ENCODE measurements at regions of chr2 and their contacts with region 1.

Region 1: DNA sequence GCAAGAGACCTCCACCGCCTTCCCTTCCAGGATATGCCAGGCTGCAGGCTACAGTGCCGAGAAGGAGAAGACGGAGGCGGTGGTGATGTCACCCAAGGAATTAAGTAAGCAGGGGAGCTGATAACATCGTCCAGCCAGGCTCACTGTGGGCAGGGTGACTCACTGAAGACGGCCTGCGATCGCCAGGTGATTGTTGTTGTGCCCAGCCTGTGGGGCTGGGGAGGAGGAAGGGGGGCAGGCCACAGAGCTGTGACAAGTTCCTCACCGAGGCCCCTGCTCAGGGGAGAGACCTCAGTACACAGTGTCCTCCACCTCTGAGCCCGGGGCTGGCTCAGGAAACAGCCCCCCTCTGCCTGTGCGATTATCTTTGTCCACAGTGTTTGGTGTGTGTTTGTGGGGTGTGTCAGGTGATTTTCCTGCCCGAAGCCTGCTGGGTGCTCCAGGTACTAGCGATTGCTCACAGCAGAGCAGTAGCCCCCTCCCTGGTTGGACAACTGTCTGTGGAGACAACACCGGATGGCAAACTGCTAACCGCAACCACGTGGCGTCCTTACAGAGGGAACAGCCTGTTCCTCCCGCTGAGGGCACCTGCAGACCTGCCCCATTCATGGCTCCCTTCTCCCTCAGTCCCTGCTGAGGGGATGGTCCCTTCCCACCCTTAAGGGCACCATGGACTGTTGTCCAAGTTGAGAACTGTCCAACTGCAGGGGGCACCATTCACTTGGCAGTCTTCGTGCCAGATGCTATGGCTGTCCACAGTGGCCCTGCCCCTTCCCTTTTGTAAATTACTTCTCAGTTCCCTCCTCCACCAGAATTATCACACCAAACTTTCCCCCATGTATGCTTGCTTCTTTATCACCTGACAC is 95.1 kb downstream of the ZFP36L2 start:
- DNase-seq: peak; percentile 87 to 96
- ATAC-seq: peak; percentile 86 to 87
- H3K4me3 ChIP-seq: no peak overlapping the region
- H3K27ac ChIP-seq: peak overlapping the region; percentile 75 to 86
- H3K4me1 ChIP-seq: peaks cover 31% of the 10 kb centered on the region
- CTCF ChIP-seq: peak; percentile 89
- EP300 ChIP-seq: peak in 1 of 2 experiments; percentile 12; a peak in 1 of 5 replicates
- POLR2A ChIP-seq: no peak
- RAD21 ChIP-seq: peak; percentile 94 to 96

Region 2: DNA sequence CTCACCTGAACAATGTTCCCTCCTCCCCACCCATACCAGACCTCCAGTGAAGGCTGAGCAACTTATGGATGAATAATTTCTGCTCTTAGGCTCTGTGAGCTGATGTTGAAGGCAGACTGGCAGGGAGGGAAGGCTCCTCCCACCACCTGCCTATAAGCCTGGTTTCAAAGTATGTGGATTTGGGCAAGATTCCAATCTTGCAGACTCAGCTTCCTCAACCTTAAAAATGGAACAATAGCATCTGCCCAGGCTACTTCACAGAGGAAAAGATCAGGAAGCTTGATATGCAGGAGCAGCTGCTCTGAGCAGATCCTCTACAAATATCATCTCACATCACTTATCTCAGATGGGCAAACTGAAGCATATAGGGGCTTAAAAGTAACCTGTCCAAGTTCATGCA is 17.0 kb before region 1 on chr2:
- CTCF ChIA-PET with region 1: interaction called, 13 read pairs
- POLR2A ChIA-PET with region 1: no interaction called
- DNase-seq: no peak
- ATAC-seq: no peak
- H3K4me3 ChIP-seq: no peak overlapping the region
- H3K27ac ChIP-seq: peak overlapping the region in 1 of 2 experiments; percentile 60; a peak in 1 of 6 replicates
- H3K4me1 ChIP-seq: peaks cover 22% of the 10 kb centered on the region
- CTCF ChIP-seq: no peak
- EP300 ChIP-seq: no peak
- POLR2A ChIP-seq: no peak
- RAD21 ChIP-seq: no peak

Region 3: DNA sequence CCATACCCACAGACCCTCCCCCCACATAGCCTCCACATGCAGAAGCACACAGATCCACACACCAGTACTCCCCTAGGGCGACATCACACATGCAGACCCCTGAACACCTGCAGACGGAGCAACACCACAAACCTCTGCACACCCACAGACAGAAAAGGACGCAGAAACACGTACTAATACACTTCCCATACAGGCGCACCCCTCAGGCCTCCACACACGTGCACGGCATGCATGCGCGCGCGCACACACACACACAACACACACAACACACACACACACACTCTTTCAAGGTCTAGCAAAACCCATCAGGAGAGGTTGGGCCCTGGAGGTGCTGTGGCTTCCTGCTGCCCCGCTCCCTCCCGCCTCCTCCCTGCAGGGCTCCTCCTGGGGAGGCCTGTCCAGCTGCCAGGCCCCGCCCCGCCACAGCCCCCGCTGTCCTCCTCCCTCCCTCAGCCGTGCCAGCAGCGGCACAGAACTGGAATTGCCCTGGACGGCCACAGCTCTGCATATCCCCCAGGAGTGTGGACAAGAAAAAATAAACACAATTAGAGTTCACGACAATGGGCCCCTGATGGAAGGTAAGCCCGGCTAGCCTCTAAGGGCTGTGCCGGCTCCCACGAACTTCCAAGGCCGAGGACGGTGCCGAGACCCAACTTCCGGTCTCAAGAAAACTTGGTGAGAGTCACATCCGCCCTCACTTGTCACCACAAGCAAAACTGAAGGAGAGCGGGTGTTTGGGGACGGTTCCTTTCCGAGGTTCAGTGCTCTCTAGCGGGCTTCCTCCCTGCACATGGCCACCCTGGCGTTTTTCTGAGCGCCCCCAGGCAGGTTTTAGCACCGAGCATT is 88.3 kb after region 1 on chr2:
- CTCF ChIA-PET with region 1: interaction called, 18 read pairs
- POLR2A ChIA-PET with region 1: interaction called, 4 read pairs
- DNase-seq: peak; percentile 81 to 93
- ATAC-seq: peak; percentile 71 to 84
- H3K4me3 ChIP-seq: peak overlapping the region; percentile 44
- H3K27ac ChIP-seq: peak overlapping the region; percentile 89 to 95
- H3K4me1 ChIP-seq: peaks cover 52% of the 10 kb centered on the region
- CTCF ChIP-seq: no peak
- EP300 ChIP-seq: no peak
- POLR2A ChIP-seq: peak; percentile 48
- RAD21 ChIP-seq: peak; percentile 16 to 40; a peak in 3 of 5 replicates

Measured in A549 (cell line).